ENCODE measurements at regions of chr12 and their contacts with region 1.

Region 1: GRCh38 chr12:52372216-52373154 is 5.2 kb upstream of the KRT85 start:
- DNase-seq: no peak
- ATAC-seq: peak; percentile 85
- H3K4me3 ChIP-seq: no peak overlapping the region
- H3K27ac ChIP-seq: no peak overlapping the region
- H3K4me1 ChIP-seq: no peaks in the 10 kb centered on the region
- H3K27me3 ChIP-seq: peaks cover 3 to 4% of the 10 kb centered on the region in 2 experiments; a peak in 2 of 4 replicates
- CTCF ChIP-seq: peak; percentile 71 to 83 (median 79)
- EP300 ChIP-seq: no peak
- POLR2A ChIP-seq: no peak
- RAD21 ChIP-seq: peak; percentile 82

Region 2: DNA sequence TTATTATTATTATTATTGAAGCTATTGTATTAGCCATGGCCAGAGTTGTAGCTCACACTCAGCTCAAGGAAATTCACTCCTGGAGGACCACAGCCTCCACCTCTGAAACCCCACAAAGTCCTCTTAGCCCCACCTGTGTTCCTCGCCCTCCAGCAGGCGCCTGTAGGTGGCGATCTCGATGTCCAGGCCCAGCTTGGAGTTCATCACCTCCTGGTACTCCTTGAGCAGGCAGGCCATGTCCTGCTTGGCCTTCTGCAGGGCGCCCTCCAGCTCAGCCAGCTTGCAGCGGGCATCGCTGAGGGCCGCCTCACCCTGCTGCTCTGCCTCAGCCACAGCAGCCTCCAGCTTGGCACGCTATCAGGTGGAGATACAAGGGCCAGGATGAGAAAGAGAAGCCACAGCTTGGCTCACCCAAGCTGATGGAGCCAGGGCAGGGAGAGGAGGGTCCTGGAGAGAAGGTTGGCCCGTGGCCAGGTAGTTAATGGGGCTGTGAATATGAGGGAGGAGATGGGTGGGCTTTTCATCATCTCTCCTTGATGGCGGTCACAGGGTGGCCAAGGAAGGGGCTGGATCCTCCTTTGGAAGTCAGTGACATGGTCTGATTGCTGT is 10.3 kb before region 1 on chr12:
- CTCF ChIA-PET with region 1: interaction called, 21 read pairs
- POLR2A ChIA-PET with region 1: no interaction called
- RAD21 ChIA-PET with region 1: no interaction called
- SMC1A ChIA-PET with region 1: interaction called, 3 read pairs
- in situ Hi-C with region 1: no loop called
- intact Hi-C with region 1: no loop called
- DNase-seq: no peak
- ATAC-seq: no peak
- H3K4me3 ChIP-seq: no peak overlapping the region
- H3K27ac ChIP-seq: no peak overlapping the region
- H3K4me1 ChIP-seq: peaks cover 12% of the 10 kb centered on the region
- H3K27me3 ChIP-seq: no peaks in the 10 kb centered on the region; a peak in 1 of 4 replicates
- CTCF ChIP-seq: peak; percentile 11 to 40 (median 33); a peak in 4 of 6 replicates
- EP300 ChIP-seq: no peak
- POLR2A ChIP-seq: no peak
- RAD21 ChIP-seq: no peak

Region 3: DNA sequence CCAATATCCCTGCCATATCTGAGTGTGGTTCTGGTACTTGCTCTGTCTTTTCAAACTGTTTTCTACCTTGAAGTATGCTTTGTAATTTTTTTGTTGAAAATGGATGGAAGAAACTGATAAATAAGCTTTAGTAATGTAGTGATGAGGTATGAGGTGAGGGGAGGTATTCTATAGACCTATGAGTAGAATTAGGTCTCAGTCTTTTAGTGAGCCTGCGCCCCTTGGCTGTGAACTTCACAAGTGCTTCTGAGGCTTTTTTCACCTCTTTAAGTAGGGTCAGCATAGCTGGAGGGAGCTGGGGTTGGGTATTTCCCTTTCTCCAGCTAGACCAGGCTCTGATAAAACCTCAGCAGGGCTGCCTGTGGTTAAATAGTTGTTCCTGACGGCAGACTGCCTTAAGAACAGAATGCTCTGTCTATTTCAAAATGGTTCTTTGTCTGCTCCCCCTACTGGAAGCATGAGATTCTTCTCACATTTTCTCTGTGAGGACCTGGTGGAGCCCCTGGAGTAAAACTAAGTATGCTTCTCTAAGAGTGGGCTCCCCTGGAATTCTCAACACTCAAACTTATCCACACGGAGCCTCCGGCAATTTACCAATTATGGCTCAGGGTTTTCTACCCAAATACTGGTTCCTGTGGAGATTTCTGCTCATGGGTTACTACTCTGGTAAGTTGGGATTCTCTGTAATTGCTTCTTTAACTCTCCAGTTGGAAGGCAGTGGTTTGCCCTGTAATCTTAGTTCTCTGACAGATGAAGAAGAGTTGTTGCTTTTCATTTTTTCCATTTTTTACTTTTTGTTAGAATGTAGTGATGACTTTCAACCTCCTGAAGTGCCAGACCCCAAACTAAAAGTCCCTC is 134.6 kb after region 1 on chr12:
- CTCF ChIA-PET with region 1: interaction called, 4 read pairs
- POLR2A ChIA-PET with region 1: no interaction called
- RAD21 ChIA-PET with region 1: no interaction called
- SMC1A ChIA-PET with region 1: no interaction called
- in situ Hi-C with region 1: no loop called
- intact Hi-C with region 1: loop called (anchors 10 kb)
- DNase-seq: no peak
- ATAC-seq: peak; percentile 48; the same call in 1 of the 3 replicates
- H3K4me3 ChIP-seq: no peak overlapping the region
- H3K27ac ChIP-seq: no peak overlapping the region
- H3K4me1 ChIP-seq: no peaks in the 10 kb centered on the region
- H3K27me3 ChIP-seq: no peaks in the 10 kb centered on the region
- CTCF ChIP-seq: peak; percentile 35 to 48 (median 41); a peak in 5 of 6 replicates
- EP300 ChIP-seq: no peak
- POLR2A ChIP-seq: no peak
- RAD21 ChIP-seq: no peak

Region 4: GRCh38 chr12:52870351-52871290 is 498.1 kb after region 1 on chr12:
- CTCF ChIA-PET with region 1: interaction called, 13 read pairs
- POLR2A ChIA-PET with region 1: no interaction called
- RAD21 ChIA-PET with region 1: interaction called, 7 read pairs
- SMC1A ChIA-PET with region 1: no interaction called
- in situ Hi-C with region 1: no loop called
- intact Hi-C with region 1: no loop called
- DNase-seq: no peak
- ATAC-seq: peak; percentile 91
- H3K4me3 ChIP-seq: no peak overlapping the region
- H3K27ac ChIP-seq: no peak overlapping the region
- H3K4me1 ChIP-seq: peaks cover 6% of the 10 kb centered on the region
- H3K27me3 ChIP-seq: peaks cover 0 to 3% of the 10 kb centered on the region in 2 experiments; a peak in 2 of 4 replicates
- CTCF ChIP-seq: peak; percentile 79 to 83 (median 82)
- EP300 ChIP-seq: no peak
- POLR2A ChIP-seq: no peak
- RAD21 ChIP-seq: peak; percentile 77